Keratinocyte (primary cell): ENCODE measurements at regions of chr5 and their contacts with region 1.

Region 1: DNA sequence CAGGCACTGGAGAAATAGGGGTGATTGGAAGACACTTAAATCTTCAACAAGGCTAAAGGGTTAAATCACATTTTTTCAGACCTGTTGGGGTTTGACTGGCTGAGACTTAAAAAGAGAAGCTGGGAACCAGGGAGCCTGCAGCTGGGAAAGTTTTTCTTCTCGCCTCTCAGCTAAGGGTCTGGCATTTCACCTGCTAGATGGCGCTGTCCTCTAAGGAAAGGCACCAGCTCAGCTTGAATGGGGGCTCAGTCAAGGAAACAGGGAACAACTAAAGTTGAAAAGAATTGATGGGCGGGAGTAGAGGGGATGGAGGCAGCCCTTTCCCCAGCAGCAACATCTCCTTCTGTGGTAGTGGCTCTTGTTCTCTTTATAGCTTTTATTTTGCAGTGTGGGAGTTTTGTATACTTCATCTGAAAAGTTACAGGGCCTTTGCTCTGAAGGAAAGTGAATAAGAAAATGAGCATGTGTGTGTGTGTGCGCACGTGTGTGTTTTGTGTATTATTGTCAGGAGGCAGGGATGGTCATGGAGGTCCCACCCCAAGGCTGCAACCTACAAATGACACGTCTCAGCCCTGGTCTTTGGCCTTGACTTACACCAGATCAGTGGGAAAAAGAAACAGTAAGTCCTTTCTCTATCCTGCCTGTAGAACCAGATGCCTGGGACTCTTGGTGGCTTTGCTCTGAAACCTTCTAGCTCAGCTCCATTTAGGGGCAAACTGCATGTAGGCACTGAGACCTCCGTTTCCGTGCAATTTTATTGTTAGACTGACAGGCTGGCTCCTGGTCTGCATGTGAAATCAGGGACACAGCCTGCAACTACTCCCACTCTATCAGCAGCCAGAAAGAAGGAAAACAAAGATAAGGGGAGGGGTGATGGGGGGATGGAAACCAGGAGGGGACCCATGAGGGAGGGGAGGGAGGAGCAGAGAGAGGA is 316.2 kb upstream of the CLINT1 start:
- DNase-seq: no peak
- H3K4me3 ChIP-seq: no peak overlapping the region
- H3K27ac ChIP-seq: no peak overlapping the region
- H3K4me1 ChIP-seq: no peaks in the 10 kb centered on the region
- H3K27me3 ChIP-seq: no peaks in the 10 kb centered on the region
- CTCF ChIP-seq: peak; percentile 76 to 87 (median 84)

Region 2: DNA sequence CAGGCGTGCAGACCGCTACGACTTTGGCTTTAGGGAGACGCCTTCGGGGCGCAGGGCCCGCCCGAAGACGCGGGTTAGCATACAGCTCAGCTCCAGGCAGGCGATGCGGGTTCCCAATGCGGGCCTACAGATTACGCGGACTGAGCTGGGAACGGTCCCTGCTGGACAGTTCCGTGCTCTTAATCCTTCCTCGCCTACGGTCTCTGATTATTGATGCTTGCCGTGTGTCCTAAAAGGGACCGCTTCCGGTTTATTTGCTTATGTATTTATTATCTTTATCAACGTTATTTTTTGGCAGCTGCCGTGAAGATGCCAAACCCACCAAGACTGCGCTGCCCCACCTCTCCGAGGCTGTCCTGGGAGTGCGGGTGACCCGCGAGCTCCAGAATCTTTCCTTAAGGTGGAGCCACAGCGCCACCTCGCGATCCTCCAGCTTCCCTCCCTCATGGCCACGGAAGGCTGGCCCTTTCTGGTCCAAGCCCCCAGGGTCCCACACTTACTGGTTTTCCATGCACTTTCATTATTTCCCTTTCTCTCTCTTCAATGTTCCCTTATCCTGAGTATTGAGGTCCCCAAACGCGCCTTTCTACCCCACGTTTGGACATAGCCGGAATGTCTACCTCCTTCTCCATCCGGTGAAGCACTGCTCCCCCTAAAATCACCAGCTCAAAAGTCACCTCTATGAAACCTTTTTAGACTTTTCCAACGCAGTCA is 931.5 kb after region 1 on chr5:
- dilution Hi-C with region 1: loop called (anchors 25 kb)
- DNase-seq: no peak
- H3K4me3 ChIP-seq: no peak overlapping the region
- H3K27ac ChIP-seq: no peak overlapping the region
- H3K4me1 ChIP-seq: no peaks in the 10 kb centered on the region
- H3K27me3 ChIP-seq: peaks cover 55% of the 10 kb centered on the region
- CTCF ChIP-seq: peak; percentile 84 to 90 (median 87)